Mammary epithelial cell (primary cell): ENCODE measurements at regions of chr10 and their contacts with region 1.

Region 1: DNA sequence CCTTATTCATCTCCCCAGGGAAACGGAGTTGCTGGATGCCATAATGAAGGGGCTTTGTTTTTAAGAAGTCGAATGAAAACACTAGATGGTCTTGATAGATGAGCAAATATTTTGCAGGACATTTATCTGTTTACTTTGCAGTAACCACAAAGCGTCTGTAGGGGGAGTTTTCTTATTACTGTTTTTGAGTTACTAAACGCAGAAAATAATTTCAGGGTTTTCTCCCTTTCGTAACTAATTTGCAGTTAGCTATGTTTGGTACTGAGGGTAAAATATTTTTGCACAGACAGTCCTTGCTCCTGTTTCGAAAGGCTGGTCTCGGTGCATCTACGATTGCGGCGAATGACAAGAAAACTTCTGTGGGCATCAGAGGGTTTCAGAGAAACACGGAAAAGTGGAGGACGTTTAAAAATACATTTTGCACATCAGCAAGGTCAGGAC is 505.6 kb upstream of the MKI67 start:
- DNase-seq: peak; percentile 20
- H3K4me3 ChIP-seq: no peak overlapping the region
- H3K27ac ChIP-seq: peak overlapping the region; percentile 95
- H3K4me1 ChIP-seq: peaks cover 33% of the 10 kb centered on the region
- H3K27me3 ChIP-seq: no peaks in the 10 kb centered on the region
- CTCF ChIP-seq: peak; percentile 54 to 61

Region 2: DNA sequence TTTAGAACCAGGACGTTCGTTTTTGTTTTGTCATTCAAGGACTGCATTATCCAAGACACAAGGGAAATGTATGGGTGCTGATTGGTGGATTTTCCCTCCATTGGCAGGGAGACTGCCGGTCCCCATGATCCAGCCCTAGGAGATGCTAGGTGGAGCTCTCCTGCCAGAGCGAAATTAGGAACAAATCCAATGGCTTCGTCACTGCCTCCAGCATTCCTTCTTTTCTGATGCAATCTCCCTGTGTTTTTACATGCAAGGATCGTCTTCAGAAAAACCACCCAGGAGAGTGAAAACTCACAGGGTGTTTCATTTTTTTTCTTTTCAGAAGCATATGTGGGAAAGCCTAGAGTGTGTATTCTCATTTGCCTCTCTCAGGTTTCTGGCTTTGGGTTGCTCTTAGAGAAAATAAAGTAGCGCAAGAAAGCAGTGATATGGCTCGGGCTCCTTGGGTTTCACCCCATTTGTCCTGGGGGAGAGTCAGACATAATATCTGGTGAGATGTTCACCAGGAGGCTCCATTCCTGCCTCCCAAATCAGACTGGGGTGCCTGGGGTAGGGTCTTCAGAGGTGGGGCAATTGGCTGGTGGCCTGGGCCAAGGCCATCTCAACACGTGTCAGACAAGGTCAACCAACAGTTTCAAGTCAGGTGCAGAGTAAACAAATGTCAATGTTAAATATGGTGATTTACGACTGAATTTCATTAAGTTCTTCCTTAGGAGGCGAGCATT is 54.7 kb before region 1 on chr10:
- CTCF ChIA-PET with region 1: no interaction called
- dilution Hi-C with region 1: no loop called
- in situ Hi-C with region 1: no loop called
- intact Hi-C with region 1: no loop called
- DNase-seq: no peak
- H3K4me3 ChIP-seq: no peak overlapping the region
- H3K27ac ChIP-seq: no peak overlapping the region
- H3K4me1 ChIP-seq: no peaks in the 10 kb centered on the region
- H3K27me3 ChIP-seq: no peaks in the 10 kb centered on the region
- CTCF ChIP-seq: peak in 1 of 2 donors; percentile 3

Region 3: GRCh38 chr10:128642023-128642422 is 10.2 kb after region 1 on chr10:
- CTCF ChIA-PET with region 1: no interaction called
- dilution Hi-C with region 1: no loop called
- in situ Hi-C with region 1: no loop called
- intact Hi-C with region 1: loop called (anchors 1 kb)
- DNase-seq: peak; percentile 76
- H3K4me3 ChIP-seq: no peak overlapping the region
- H3K27ac ChIP-seq: peak overlapping the region; percentile 56
- H3K4me1 ChIP-seq: peaks cover 32% of the 10 kb centered on the region
- H3K27me3 ChIP-seq: no peaks in the 10 kb centered on the region
- CTCF ChIP-seq: no peak

Region 4: DNA sequence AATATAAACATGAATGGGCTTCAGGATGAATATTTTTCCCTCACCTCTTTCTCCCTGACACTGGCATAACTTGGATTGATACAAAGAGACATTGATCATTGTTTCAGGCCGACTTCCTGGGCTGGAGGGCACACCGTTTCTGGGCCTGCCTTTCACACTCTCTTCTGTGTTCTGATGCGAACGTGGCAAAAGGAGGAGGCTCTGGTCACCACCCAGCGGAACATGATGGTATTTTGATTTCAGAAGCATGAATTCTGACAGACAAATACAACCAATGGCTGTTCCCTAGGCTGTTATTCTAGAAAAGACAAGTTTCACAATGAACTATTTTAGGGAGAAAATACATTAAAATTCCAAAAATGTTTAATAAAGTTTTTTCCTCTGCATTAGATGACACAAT is 28.9 kb after region 1 on chr10:
- CTCF ChIA-PET with region 1: interaction called, 6 read pairs
- dilution Hi-C with region 1: no loop called
- in situ Hi-C with region 1: no loop called
- intact Hi-C with region 1: loop called (anchors 1 kb)
- DNase-seq: peak; percentile 39
- H3K4me3 ChIP-seq: no peak overlapping the region
- H3K27ac ChIP-seq: no peak overlapping the region
- H3K4me1 ChIP-seq: no peaks in the 10 kb centered on the region
- H3K27me3 ChIP-seq: peaks cover 2% of the 10 kb centered on the region
- CTCF ChIP-seq: peak; percentile 47 to 69

Region 5: DNA sequence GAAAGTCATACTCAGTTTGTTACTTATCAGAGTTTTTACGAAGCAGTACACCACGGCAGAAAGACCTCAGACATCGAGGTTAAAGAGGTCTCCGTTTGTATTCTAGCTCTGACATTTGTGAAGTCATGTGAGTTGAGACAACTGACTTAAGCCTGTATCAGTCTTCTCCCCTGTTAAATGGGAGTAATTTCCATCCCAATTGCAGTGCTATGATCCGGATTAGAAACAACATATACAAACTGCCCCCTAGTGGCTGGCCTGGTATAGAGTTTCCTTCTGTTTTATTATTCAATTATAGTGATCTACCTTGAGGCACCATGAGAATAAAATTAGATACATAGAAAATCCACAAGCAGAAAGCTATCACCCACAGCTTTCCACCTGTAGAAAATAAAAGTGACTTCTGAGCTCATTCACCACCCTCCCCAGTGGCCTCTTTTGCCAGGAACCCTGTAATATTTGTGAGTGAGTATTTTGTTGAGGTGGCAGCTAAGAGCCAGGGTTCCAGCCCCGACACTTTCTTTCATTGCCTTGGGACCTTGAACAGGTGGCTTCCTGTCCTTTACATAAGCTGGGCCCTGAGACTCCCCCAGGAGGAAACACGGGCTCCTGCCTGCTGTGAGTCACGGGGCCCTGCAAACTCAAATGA is 228.0 kb after region 1 on chr10:
- CTCF ChIA-PET with region 1: no interaction called
- dilution Hi-C with region 1: no loop called
- in situ Hi-C with region 1: no loop called
- intact Hi-C with region 1: loop called (anchors 1 kb)
- DNase-seq: no peak
- H3K4me3 ChIP-seq: no peak overlapping the region
- H3K27ac ChIP-seq: no peak overlapping the region
- H3K4me1 ChIP-seq: no peaks in the 10 kb centered on the region
- H3K27me3 ChIP-seq: no peaks in the 10 kb centered on the region
- CTCF ChIP-seq: peak; percentile 28 to 31

Region 6: DNA sequence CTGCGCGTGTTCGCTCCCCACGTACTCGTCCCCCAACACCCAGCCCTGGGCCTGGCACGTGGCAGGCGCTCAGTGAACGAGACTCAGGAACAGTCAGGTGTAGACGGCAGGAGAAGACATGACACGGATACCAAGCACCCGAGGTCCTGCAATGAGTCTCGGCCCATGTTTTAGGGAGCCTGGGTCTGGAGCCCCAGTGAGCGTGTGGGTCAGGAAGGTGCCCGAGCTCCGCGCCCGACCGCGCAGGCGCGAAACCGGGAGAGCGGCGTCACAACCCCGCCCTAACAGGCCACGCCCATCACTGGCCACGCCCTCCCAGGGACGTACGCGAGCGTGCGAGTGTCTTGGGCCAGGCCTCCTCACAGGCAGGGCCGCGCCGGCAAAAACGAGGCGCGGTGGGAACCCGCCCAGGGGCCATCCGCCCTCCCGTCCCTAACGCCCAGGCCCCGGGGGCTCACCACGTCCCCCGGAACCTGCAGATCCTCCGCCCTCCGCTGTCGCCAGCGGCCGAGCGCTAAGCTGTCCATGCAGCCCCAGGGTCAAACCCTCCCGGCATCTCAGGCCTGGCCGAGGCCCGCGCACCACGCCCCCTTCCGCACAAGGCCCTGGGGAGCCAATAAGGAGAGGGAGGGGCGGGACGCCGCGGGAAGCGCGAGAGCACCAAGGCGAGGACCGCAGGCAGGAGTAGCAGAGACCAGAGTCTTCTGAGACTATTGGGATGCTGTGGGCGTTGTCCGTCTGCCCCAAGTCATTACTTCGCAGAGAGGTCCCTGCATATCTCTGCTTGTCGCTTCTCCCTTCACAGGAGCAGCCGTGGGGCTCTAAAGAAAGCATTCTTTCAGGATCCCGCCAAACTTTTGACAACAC is 1478.7 kb after region 1 on chr10 and contains the start of gene C10orf143:
- CTCF ChIA-PET with region 1: no interaction called
- dilution Hi-C with region 1: no loop called
- in situ Hi-C with region 1: no loop called
- intact Hi-C with region 1: loop called (anchors 5 kb)
- DNase-seq: peak; percentile 97
- H3K4me3 ChIP-seq: peak within 1 kb of the TSS; percentile 74 to 93 (median 84)
- H3K27ac ChIP-seq: peak within 1 kb of the TSS; percentile 94
- H3K4me1 ChIP-seq: peaks cover 11% of the 10 kb centered on the region
- H3K27me3 ChIP-seq: no peaks in the 10 kb centered on the region
- CTCF ChIP-seq: no peak
- total RNA-seq, gene C10orf143: 1.3 to 2.4 TPM

Region 7: DNA sequence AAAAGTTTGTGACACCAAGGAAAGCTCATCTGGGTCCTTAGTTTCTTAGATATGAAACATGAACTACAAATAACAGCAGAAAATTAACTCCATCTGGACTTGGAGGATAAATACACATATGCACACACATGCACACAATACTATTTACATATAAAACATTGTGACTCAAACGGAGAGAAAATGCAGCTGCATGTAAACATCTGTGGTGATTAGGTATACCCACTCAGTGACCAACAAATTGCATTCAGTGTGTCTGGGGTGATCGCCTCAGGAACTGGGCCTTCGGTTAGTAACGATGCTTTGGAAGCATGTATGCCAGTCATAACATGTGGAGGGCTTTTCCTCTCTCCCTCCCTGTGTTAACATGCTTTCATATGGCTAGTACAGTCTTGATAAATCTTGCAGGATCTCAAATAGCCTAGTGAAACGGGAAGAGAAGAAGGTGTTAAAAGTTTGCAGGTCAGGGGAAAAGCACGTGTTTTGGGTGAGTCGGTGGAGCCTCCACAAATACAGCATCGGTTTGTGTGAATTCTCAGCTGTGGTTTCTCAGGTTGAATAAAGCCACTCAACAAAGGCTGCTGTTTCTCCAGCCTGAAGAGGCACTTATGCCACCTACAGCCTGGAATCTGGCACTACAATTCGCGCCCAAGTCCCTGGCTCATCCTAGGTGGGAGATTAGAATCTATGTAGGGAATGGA is 1495.7 kb after region 1 on chr10:
- CTCF ChIA-PET with region 1: no interaction called
- dilution Hi-C with region 1: no loop called
- in situ Hi-C with region 1: loop called in 1 of 2 experiments (anchors 25 kb)
- intact Hi-C with region 1: no loop called
- DNase-seq: peak; percentile 66
- H3K4me3 ChIP-seq: no peak overlapping the region
- H3K27ac ChIP-seq: no peak overlapping the region
- H3K4me1 ChIP-seq: no peaks in the 10 kb centered on the region
- H3K27me3 ChIP-seq: peaks cover 3% of the 10 kb centered on the region
- CTCF ChIP-seq: peak; percentile 93 to 94